ENCODE measurements at regions of chr16 and their contacts with region 1.

Region 1: DNA sequence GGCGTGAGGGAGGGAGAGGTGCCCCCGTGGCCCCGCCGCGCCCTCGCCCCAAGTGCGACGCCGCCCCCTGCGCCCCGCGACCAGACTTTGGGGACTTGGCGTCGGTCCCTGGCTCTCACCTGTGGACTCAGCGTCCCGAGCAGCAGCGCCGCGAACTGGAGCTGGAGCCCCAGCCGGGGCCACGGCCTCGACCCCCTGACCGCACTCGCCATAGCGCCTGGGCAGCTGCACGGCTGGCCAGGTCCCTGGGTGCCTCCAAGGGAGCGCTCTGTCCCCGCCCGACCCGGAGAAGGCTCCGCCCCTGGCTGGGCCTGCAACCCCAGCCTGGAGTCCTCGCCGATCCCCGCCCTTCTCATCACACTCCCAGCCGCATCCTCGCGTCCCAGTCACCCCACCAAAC is at the start of gene ERN2:
- DNase-seq: no peak
- H3K4me3 ChIP-seq: no peak within 1 kb of the TSS
- H3K27ac ChIP-seq: no peak within 1 kb of the TSS
- H3K4me1 ChIP-seq: no peaks in the 10 kb centered on the region
- H3K27me3 ChIP-seq: peaks cover 9% of the 10 kb centered on the region; the same call in 1 of the 2 replicates
- CTCF ChIP-seq: no peak
- EP300 ChIP-seq: no peak
- RAD21 ChIP-seq: no peak
- polyA plus RNA-seq, gene ERN2: 0.03 TPM in 1 of 2 replicates, not detected in the other

Region 2: DNA sequence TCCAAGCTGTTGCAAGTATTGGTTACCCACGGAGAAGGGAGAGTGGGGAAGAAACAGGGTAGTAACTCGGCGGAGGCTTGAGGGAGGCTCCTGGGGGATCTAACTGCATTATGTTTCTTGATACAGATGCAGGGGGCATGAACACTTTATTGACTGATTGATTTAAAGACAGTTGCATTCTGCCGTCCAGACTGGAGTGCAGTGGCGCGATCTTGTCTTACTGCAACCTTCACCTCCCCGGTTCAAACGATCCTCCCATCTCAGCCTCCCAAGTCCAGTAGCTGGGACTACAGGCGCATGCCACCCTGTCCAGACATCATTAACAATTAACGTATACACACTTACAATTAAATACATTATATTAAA is 15.1 kb after region 1 on chr16:
- CTCF ChIA-PET with region 1: interaction called, 15 read pairs
- POLR2A ChIA-PET with region 1: no interaction called
- DNase-seq: no peak
- H3K4me3 ChIP-seq: no peak overlapping the region
- H3K27ac ChIP-seq: no peak overlapping the region
- H3K4me1 ChIP-seq: no peaks in the 10 kb centered on the region
- H3K27me3 ChIP-seq: no peaks in the 10 kb centered on the region; the same call in 1 of the 2 replicates
- CTCF ChIP-seq: peak; percentile 6
- EP300 ChIP-seq: no peak
- RAD21 ChIP-seq: no peak

Measured in SK-N-SH (cell line).